GM10248 (cell line): ENCODE measurements at regions of chr2 and their contacts with region 1.

Region 1: GRCh38 chr2:3780477-3781402 is 77.4 kb downstream of the DCDC2C start:
- DNase-seq: peak; percentile 80
- CTCF ChIP-seq: peak; percentile 58

Region 2: GRCh38 chr2:3768960-3769765 is 11.6 kb before region 1 on chr2:
- CTCF ChIA-PET with region 1: interaction called, 10 read pairs
- POLR2A ChIA-PET with region 1: no interaction called
- DNase-seq: no peak
- CTCF ChIP-seq: no peak